ENCODE measurements at regions of chr2 and their contacts with region 1.

Region 1: GRCh38 chr2:73290049-73290839 is 3.1 kb downstream of the EGR4 start:
- DNase-seq: no peak
- H3K4me3 ChIP-seq: no peak overlapping the region
- H3K27ac ChIP-seq: no peak overlapping the region
- H3K27me3 ChIP-seq: peaks cover 58% of the 10 kb centered on the region
- CTCF ChIP-seq: peak; percentile 71

Region 2: GRCh38 chr2:73279852-73280251 is 10.4 kb before region 1 on chr2:
- CTCF ChIA-PET with region 1: interaction called, 13 read pairs
- POLR2A ChIA-PET with region 1: no interaction called
- DNase-seq: no peak
- H3K4me3 ChIP-seq: no peak overlapping the region
- H3K27ac ChIP-seq: no peak overlapping the region
- H3K27me3 ChIP-seq: peaks cover 4% of the 10 kb centered on the region
- CTCF ChIP-seq: no peak

Region 3: GRCh38 chr2:73588177-73588576 is 297.9 kb after region 1 on chr2:
- CTCF ChIA-PET with region 1: no interaction called
- POLR2A ChIA-PET with region 1: no interaction called
- DNase-seq: no peak
- H3K4me3 ChIP-seq: no peak overlapping the region
- H3K27ac ChIP-seq: no peak overlapping the region
- H3K27me3 ChIP-seq: no peaks in the 10 kb centered on the region
- CTCF ChIP-seq: no peak